CD4-positive, alpha-beta T cell (primary cell): ENCODE measurements at regions of chrX and their contacts with region 1.

Region 1: DNA sequence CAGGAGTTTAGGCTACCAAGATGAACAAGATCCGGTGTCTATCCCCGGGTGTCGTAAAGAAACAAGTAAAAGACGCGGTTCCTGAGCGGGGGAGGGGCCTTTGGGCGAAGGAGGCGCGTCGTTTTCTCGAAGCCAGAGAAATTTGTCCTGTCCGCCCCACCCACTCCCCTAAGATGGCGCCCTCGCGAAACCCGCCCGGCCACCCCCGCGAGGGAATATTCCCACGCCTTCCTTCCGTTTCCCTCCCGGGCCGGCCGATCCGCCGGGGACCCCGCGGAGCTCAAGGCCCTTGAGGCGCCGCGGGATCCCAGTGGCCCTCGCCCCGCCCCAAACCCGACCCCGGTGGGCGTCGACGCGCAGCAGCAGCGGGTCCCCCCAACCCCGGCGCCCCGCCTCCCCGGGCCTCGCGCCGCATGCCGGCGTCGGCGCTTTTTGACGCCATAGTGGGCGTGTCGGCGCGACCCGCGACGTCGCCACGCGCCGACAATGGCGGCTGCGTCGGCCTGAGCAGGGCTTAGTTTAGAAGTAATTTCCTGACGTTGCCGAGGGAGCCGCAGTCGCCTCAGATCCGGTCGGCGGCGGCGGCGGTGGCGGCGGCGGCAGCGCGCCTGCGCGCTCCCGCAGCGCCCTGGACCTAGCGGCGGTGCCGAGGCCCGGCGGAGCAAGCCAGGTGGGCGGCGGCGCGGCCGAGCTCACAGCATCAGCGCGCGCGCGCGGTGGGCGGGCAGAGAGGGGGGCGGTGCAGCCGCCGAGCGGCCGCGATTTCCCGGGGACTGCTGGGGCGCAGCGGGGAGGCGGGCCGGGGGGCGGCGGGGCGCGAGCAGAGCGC is at the start of gene HTATSF1:
- DNase-seq: peak; percentile 71 to 94 (median 82)
- ATAC-seq: peak; percentile 75
- H3K4me3 ChIP-seq: peak within 1 kb of the TSS; percentile 88
- H3K4me3 Mint-ChIP-seq: peak within 1 kb of the TSS; percentile 96
- H3K27ac ChIP-seq: peak within 1 kb of the TSS; percentile 83 to 85
- H3K27ac Mint-ChIP-seq: peak within 1 kb of the TSS; percentile 100
- H3K4me1 ChIP-seq: peaks cover 7% of the 10 kb centered on the region
- H3K4me1 Mint-ChIP-seq: peaks cover 26% of the 10 kb centered on the region
- H3K27me3 ChIP-seq: no peaks in the 10 kb centered on the region
- H3K27me3 Mint-ChIP-seq: no peaks in the 10 kb centered on the region
- CTCF ChIP-seq: no peak
- total RNA-seq, gene HTATSF1: 28.3 to 31.1 TPM

Region 2: GRCh38 chrX:135973548-135974278 is 523.3 kb before region 1 on chrX and contains the start of gene MMGT1:
- CTCF ChIA-PET with region 1: no interaction called
- POLR2A ChIA-PET with region 1: no interaction called
- intact Hi-C with region 1: loop called in 1 of 2 experiments (anchors 5 kb)
- DNase-seq: peak; percentile 63 to 92 (median 76)
- ATAC-seq: peak; percentile 84
- H3K4me3 ChIP-seq: peak within 1 kb of the TSS; percentile 92
- H3K4me3 Mint-ChIP-seq: peak within 1 kb of the TSS; percentile 95
- H3K27ac ChIP-seq: peak within 1 kb of the TSS; percentile 79 to 89
- H3K27ac Mint-ChIP-seq: peak within 1 kb of the TSS; percentile 97
- H3K4me1 ChIP-seq: peaks cover 13% of the 10 kb centered on the region
- H3K4me1 Mint-ChIP-seq: peaks cover 48% of the 10 kb centered on the region
- H3K27me3 ChIP-seq: no peaks in the 10 kb centered on the region
- H3K27me3 Mint-ChIP-seq: no peaks in the 10 kb centered on the region
- CTCF ChIP-seq: no peak
- total RNA-seq, gene MMGT1: 36.4 to 37.0 TPM

Region 3: GRCh38 chrX:136577552-136577951 is 80.6 kb after region 1 on chrX:
- CTCF ChIA-PET with region 1: no interaction called
- POLR2A ChIA-PET with region 1: interaction called, 3 read pairs
- intact Hi-C with region 1: loop called in 1 of 2 experiments (anchors 5 kb)
- DNase-seq: peak; percentile 45 to 85 (median 62)
- ATAC-seq: peak; percentile 100
- H3K4me3 ChIP-seq: no peak overlapping the region
- H3K4me3 Mint-ChIP-seq: no peak overlapping the region
- H3K27ac ChIP-seq: no peak overlapping the region
- H3K27ac Mint-ChIP-seq: peak overlapping the region; percentile 61
- H3K4me1 ChIP-seq: peaks cover 12% of the 10 kb centered on the region
- H3K4me1 Mint-ChIP-seq: peaks cover 13% of the 10 kb centered on the region
- H3K27me3 ChIP-seq: no peaks in the 10 kb centered on the region
- H3K27me3 Mint-ChIP-seq: no peaks in the 10 kb centered on the region
- CTCF ChIP-seq: peak; percentile 63

Region 4: DNA sequence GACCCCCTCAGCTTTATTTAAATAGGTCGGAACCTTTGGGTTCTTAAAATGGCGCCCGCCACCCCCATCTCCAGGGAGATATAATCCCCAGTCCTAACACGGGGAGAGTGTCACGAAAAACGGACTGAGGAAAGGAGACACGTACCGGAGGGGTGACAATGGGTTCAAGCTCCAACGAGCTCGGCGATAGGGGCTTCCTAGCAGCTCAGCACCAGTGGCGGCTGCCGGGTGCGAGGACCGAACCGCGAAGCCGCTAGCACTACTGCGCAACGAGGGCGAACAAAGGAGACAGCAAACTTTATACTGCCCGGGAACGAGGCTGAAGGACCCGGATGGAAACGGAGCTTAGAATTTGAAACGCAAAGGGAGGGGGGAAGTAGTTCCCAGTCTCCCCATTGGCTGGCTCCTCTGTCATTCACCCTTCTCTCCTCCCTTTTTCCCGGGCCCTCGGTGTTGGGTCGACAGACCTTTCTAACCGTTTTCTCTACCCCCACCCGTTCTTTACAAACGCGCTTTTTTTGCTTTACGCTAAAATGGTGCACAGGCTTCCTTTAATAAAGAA is 383.5 kb after region 1 on chrX and contains the start of gene RBMX:
- CTCF ChIA-PET with region 1: no interaction called
- POLR2A ChIA-PET with region 1: interaction called, 24 read pairs
- intact Hi-C with region 1: no loop called
- DNase-seq: peak; percentile 82 to 94 (median 88)
- ATAC-seq: peak; percentile 83
- H3K4me3 ChIP-seq: peak within 1 kb of the TSS; percentile 97
- H3K4me3 Mint-ChIP-seq: peak within 1 kb of the TSS; percentile 100
- H3K27ac ChIP-seq: peak within 1 kb of the TSS; percentile 94 to 97
- H3K27ac Mint-ChIP-seq: peak within 1 kb of the TSS; percentile 99
- H3K4me1 ChIP-seq: peaks cover 28% of the 10 kb centered on the region
- H3K4me1 Mint-ChIP-seq: peaks cover 34% of the 10 kb centered on the region
- H3K27me3 ChIP-seq: no peaks in the 10 kb centered on the region
- H3K27me3 Mint-ChIP-seq: no peaks in the 10 kb centered on the region
- CTCF ChIP-seq: no peak
- total RNA-seq, gene RBMX: 310 to 317 TPM